CD4-positive, alpha-beta memory T cell (primary cell): ENCODE measurements at regions of chr22 and their contacts with region 1.

Region 1: GRCh38 chr22:50341977-50342650 is 1.0 kb upstream of the PPP6R2 start:
- DNase-seq: peak; percentile 83 to 89 (median 86)
- H3K4me3 ChIP-seq: peak overlapping the region; percentile 39 to 70
- H3K4me3 Mint-ChIP-seq: peak overlapping the region; percentile 80 to 93 (median 88)
- H3K27ac ChIP-seq: peak overlapping the region; percentile 84
- H3K27ac Mint-ChIP-seq: peak overlapping the region; percentile 92 to 97 (median 95)
- H3K4me1 ChIP-seq: peaks cover 28% of the 10 kb centered on the region
- H3K4me1 Mint-ChIP-seq: peaks cover 3 to 12% (median 5%) of the 10 kb centered on the region in 4 donors
- H3K27me3 ChIP-seq: no peaks in the 10 kb centered on the region
- H3K27me3 Mint-ChIP-seq: no peaks in the 10 kb centered on the region

Region 2: DNA sequence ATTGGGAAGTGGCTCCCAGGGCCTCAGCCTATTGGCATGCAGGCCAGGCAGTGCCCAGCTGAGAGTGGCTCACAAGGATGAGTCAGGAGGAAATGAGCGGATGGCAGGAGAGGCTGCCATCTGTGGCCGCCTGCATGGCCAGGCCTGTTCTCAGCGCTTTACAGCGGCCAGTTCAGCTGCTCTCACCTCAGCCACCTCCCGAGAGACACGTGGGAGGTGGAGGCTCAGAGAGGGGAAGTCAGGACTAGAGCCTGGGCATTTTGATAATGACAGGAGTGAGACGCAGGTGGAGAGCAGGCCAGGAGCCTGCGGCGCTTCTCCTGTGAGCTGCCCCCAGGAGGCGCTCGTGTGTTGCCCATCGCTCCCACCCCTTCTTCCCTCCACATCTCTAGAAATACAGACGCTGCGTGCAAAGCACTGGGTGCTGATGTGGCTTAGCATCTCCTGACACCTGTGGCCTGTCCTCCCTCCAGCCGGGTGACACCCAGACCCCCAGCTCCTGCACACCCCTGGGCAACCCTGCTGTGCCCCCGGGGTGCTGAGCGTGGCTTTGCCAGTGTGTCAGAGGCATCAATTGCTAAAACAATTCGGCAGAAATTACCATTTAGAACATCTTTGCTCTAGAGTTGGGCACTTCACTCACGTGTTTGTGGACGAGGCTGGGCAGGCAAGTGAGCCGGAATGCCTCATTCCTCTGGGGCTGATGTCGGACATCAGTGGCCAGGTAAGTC is 193.0 kb before region 1 on chr22:
- CTCF ChIA-PET with region 1: no interaction called
- POLR2A ChIA-PET with region 1: no interaction called
- intact Hi-C with region 1: loop called (anchors 5 kb)
- DNase-seq: peak; percentile 69 to 76 (median 75)
- H3K4me3 ChIP-seq: no peak overlapping the region
- H3K4me3 Mint-ChIP-seq: no peak overlapping the region
- H3K27ac ChIP-seq: no peak overlapping the region
- H3K27ac Mint-ChIP-seq: peak overlapping the region in 1 of 7 donors; percentile 7
- H3K4me1 ChIP-seq: no peaks in the 10 kb centered on the region
- H3K4me1 Mint-ChIP-seq: peaks cover 0 to 4% (median under 1%) of the 10 kb centered on the region in 4 donors
- H3K27me3 ChIP-seq: no peaks in the 10 kb centered on the region
- H3K27me3 Mint-ChIP-seq: peaks cover 2 to 3% of the 10 kb centered on the region in 2 donors

Region 3: GRCh38 chr22:50244420-50245213 is 97.5 kb before region 1 on chr22 and contains the start of gene TUBGCP6:
- CTCF ChIA-PET with region 1: interaction called, 14 read pairs
- POLR2A ChIA-PET with region 1: interaction called, 12 read pairs
- intact Hi-C with region 1: loop called (anchors 1 kb)
- DNase-seq: peak; percentile 89 to 93 (median 91)
- H3K4me3 ChIP-seq: peak within 1 kb of the TSS; percentile 37 to 99
- H3K4me3 Mint-ChIP-seq: peak within 1 kb of the TSS; percentile 95 to 100 (median 98)
- H3K27ac ChIP-seq: peak within 1 kb of the TSS; percentile 98
- H3K27ac Mint-ChIP-seq: peak within 1 kb of the TSS; percentile 90 to 100 (median 99)
- H3K4me1 ChIP-seq: peaks cover 69% of the 10 kb centered on the region
- H3K4me1 Mint-ChIP-seq: peaks cover 23 to 64% (median 37%) of the 10 kb centered on the region in 4 donors
- H3K27me3 ChIP-seq: no peaks in the 10 kb centered on the region
- H3K27me3 Mint-ChIP-seq: no peaks in the 10 kb centered on the region
- total RNA-seq, gene TUBGCP6: 132 to 133 TPM

Region 4: DNA sequence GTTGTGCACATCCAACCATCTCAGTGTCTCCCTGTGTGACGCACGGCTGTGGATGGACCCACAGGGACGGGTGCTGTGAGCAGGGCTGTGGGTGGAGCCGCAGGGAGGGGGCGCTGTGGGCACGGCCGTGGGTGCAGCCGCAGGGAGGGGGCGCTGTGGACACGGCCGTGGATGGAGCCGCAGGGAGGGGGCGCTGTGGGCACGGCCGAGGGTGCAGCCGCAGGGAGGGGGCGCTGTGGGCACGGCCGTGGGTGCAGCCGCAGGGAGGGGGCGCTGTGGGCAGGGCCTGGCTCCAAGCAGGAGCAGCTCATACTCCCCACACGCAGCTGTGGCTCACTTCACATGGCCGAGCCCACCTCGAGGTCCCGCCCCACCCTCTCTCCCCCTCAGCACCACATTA is 66.0 kb before region 1 on chr22:
- CTCF ChIA-PET with region 1: interaction called, 9 read pairs
- POLR2A ChIA-PET with region 1: interaction called, 5 read pairs
- intact Hi-C with region 1: loop called (anchors 1 kb)
- DNase-seq: peak in 3 of 5 donors; percentile 24 to 58 (median 52)
- H3K4me3 ChIP-seq: no peak overlapping the region
- H3K4me3 Mint-ChIP-seq: no peak overlapping the region
- H3K27ac ChIP-seq: no peak overlapping the region
- H3K27ac Mint-ChIP-seq: peak overlapping the region in 1 of 7 donors; percentile 66
- H3K4me1 ChIP-seq: peaks cover 6% of the 10 kb centered on the region
- H3K4me1 Mint-ChIP-seq: peaks cover 0 to 8% (median 3%) of the 10 kb centered on the region in 4 donors
- H3K27me3 ChIP-seq: no peaks in the 10 kb centered on the region
- H3K27me3 Mint-ChIP-seq: no peaks in the 10 kb centered on the region

Region 5: DNA sequence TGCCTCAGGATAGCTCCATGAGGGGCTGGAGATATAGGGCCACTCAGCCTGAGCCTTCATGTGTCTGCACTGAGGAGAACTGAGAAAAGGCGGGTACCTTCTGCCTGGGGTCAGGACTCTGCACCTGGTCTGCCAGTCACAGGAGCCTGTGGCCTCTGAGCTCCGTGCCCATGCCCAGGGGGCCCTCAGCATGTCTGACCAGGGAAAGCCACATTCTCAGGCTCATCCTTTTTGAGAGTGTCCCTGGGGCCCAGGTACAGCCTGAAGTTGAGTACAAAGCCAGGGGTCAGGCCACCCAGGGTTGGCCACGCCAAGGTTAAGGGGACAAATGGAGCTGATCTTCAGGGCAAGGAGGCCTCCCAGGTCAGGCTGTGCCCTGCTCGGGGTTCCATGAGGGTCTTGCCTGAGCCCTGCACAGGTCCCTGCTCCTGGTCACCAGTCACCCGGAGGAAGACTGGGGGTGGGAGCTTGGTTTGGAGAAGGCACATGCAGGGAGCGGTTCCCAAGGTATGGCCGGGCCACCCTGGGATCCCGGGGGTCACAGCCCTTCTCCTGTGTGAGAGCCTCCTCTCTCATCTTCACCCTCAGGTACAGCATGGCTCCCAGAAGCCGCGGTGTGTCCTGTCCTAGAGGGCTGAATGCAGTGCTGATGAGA is 21.3 kb before region 1 on chr22:
- CTCF ChIA-PET with region 1: interaction called, 21 read pairs
- POLR2A ChIA-PET with region 1: interaction called, 3 read pairs
- intact Hi-C with region 1: no loop called
- DNase-seq: peak in 1 of 5 donors; percentile 3
- H3K4me3 ChIP-seq: no peak overlapping the region
- H3K4me3 Mint-ChIP-seq: peak overlapping the region in 1 of 8 donors; percentile 15
- H3K27ac ChIP-seq: no peak overlapping the region
- H3K27ac Mint-ChIP-seq: no peak overlapping the region
- H3K4me1 ChIP-seq: no peaks in the 10 kb centered on the region
- H3K4me1 Mint-ChIP-seq: peaks cover 0 to 7% (median under 1%) of the 10 kb centered on the region in 4 donors
- H3K27me3 ChIP-seq: no peaks in the 10 kb centered on the region
- H3K27me3 Mint-ChIP-seq: no peaks in the 10 kb centered on the region

Region 6: DNA sequence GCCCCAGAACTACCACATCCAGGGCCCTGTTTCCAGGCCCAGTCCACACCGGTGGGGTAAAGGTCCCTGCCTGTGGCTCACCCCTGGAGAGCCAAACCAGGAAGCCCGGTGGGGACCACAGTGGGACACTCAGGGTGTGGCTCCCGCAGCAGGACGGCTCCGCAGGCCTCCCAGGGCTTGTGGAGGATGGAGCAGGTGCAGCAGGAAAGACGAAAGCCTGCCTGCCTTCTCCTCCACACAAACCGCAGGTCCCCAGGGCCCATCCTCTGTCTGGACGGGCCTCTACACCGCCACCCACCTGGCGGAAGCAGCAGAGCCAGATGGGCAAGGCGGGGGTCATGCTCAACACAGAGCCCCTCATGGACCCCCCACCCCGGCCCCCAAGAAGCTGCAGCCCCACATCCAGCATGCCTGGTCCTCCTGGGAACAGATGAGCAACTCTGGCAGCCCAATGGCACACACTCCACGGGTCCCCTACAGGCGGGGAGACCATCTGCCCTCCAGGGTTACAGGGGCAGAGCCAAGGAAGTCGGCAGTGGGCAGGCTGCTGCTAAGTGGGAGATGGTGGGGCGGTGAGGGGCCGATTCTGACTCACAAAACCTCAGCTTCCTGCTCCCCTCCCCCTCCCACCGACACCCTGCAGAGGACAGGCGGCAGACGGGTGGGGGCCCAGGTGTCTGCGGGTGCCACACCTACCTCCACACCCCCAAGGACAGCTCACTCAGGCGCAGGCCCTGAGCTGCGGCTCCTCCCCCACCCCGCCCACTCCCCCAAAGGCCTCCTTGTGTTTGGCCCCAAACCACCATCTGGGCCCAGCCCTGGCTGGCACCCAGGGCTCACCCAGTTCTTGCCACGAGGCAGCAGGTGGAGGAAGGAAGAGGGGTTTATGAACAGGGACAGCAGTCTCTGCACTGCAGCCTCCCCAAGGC is 127.5 kb after region 1 on chr22:
- CTCF ChIA-PET with region 1: interaction called, 4 read pairs
- POLR2A ChIA-PET with region 1: interaction called, 3 read pairs
- intact Hi-C with region 1: loop called (anchors 1 kb)
- DNase-seq: peak; percentile 96 to 99 (median 97)
- H3K4me3 ChIP-seq: peak overlapping the region; percentile 42 to 51
- H3K4me3 Mint-ChIP-seq: peak overlapping the region; percentile 74 to 88 (median 84)
- H3K27ac ChIP-seq: peak overlapping the region; percentile 75
- H3K27ac Mint-ChIP-seq: peak overlapping the region; percentile 89 to 98 (median 96)
- H3K4me1 ChIP-seq: peaks cover 58% of the 10 kb centered on the region
- H3K4me1 Mint-ChIP-seq: peaks cover 35 to 69% (median 51%) of the 10 kb centered on the region in 4 donors
- H3K27me3 ChIP-seq: no peaks in the 10 kb centered on the region
- H3K27me3 Mint-ChIP-seq: no peaks in the 10 kb centered on the region

Region 7: DNA sequence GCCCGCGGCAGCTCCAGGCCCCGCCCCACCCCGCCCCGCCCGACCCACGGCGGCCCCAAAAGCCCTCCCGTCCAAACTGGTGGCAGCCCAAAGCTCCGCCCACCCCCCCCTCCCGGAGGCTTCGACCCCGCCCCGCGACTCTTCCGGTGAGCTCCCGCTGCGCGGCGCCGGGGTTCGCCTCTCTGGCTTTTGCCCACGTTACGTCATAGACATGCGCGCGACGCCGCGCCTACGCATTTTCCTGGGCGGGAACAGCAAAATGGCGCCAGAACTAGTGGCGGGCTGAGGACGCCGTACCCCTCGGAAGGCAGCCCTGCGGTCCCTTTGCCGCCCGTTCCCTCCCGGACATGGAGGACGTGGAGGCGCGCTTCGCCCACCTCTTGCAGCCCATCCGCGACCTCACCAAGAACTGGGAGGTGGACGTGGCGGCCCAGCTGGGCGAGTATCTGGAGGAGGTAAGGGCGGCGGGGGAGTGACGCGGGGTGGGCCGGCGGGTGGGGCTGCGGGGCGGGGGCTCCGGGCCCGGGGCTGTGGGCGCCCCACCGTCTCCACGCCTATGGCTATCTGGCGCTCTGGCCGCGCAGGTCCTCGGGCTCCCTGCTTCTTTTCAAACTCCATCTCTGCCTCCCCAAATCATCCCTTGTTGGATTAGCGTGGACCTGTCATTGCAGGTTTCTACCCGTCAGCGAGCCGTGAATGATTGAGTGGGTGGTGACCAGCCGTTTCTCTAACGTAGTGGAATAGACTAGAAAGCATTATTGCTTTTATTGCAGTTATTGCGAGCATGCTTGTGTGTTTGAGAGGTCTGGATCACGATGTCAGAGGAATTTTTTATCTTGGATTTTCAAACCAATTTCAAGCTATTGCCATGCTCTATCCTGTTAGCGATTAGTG is 166.1 kb after region 1 on chr22 and contains the start of gene NCAPH2:
- CTCF ChIA-PET with region 1: interaction called, 4 read pairs
- POLR2A ChIA-PET with region 1: interaction called, 5 read pairs
- intact Hi-C with region 1: loop called (anchors 2 kb)
- DNase-seq: peak; percentile 96 to 97 (median 97)
- H3K4me3 ChIP-seq: peak within 1 kb of the TSS; percentile 84 to 98
- H3K4me3 Mint-ChIP-seq: peak within 1 kb of the TSS; percentile 92 to 98 (median 94)
- H3K27ac ChIP-seq: peak within 1 kb of the TSS; percentile 98
- H3K27ac Mint-ChIP-seq: peak within 1 kb of the TSS; percentile 90 to 99 (median 98)
- H3K4me1 ChIP-seq: peaks cover 28% of the 10 kb centered on the region
- H3K4me1 Mint-ChIP-seq: peaks cover 10 to 26% (median 19%) of the 10 kb centered on the region in 4 donors
- H3K27me3 ChIP-seq: no peaks in the 10 kb centered on the region
- H3K27me3 Mint-ChIP-seq: no peaks in the 10 kb centered on the region
- total RNA-seq, gene NCAPH2: 81.1 to 81.8 TPM